ENCODE measurements at regions of chr17 and their contacts with region 1.

Region 1: GRCh38 chr17:73231841-73232586 is 29.7 kb downstream of the CPSF4L start:
- DNase-seq: peak; percentile 94 to 95
- ATAC-seq: peak; percentile 84 to 95
- H3K4me3 ChIP-seq: peak overlapping the region; percentile 88
- H3K27ac ChIP-seq: peak overlapping the region; percentile 89 to 95
- H3K4me1 ChIP-seq: peaks cover 44% of the 10 kb centered on the region
- CTCF ChIP-seq: no peak
- EP300 ChIP-seq: no peak
- POLR2A ChIP-seq: peak; percentile 88
- RAD21 ChIP-seq: peak in 1 of 2 experiments; percentile 1; a peak in 1 of 5 replicates

Region 2: DNA sequence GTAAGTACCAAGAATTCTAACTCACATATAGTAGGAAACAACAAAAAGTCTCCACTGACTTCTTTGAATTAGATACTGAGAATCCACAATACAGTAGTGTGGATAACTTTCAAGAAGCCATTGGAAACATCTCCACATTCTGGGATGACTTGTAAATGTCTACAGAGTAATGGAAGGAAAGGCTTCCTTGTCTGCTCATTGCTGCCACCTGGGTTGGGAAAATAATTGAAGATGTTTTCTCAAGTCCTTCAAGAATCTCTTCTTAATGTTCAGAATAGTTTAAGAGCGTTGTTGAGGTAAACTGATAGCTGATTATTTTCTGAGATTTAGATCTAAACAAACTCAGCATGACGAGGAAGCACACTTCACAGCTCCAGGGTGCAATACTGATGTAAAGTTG is 15.7 kb after region 1 on chr17:
- CTCF ChIA-PET with region 1: interaction called, 12 read pairs
- POLR2A ChIA-PET with region 1: interaction called, 4 read pairs
- DNase-seq: peak in 1 of 2 experiments; percentile 32
- ATAC-seq: peak in 1 of 2 experiments; percentile 41; a peak in 1 of 6 replicates
- H3K4me3 ChIP-seq: no peak overlapping the region
- H3K27ac ChIP-seq: no peak overlapping the region
- H3K4me1 ChIP-seq: no peaks in the 10 kb centered on the region
- CTCF ChIP-seq: peak; percentile 47
- EP300 ChIP-seq: no peak
- POLR2A ChIP-seq: no peak
- RAD21 ChIP-seq: peak; percentile 38; a peak in 3 of 5 replicates

Region 3: DNA sequence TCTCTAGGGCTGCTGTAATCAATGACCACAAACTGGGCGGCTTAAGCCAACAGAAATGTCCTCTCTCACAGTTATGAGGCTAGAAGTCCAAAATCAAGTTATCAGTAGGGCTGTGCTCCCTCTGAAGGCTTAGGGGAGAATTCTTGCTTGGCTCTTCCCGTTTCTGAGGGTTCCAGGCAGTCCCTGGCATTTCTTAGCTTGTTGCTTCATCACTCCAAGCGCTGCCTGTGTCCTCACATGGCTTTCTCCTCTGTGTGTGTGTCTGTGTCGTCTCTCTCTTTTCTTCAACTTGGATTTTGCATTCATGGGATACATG is 93.5 kb after region 1 on chr17:
- CTCF ChIA-PET with region 1: no interaction called
- POLR2A ChIA-PET with region 1: no interaction called
- DNase-seq: no peak
- ATAC-seq: peak; percentile 45 to 74; a peak in 4 of 6 replicates
- H3K4me3 ChIP-seq: no peak overlapping the region
- H3K27ac ChIP-seq: no peak overlapping the region
- H3K4me1 ChIP-seq: no peaks in the 10 kb centered on the region
- CTCF ChIP-seq: no peak
- EP300 ChIP-seq: no peak
- POLR2A ChIP-seq: no peak
- RAD21 ChIP-seq: no peak

Region 4: DNA sequence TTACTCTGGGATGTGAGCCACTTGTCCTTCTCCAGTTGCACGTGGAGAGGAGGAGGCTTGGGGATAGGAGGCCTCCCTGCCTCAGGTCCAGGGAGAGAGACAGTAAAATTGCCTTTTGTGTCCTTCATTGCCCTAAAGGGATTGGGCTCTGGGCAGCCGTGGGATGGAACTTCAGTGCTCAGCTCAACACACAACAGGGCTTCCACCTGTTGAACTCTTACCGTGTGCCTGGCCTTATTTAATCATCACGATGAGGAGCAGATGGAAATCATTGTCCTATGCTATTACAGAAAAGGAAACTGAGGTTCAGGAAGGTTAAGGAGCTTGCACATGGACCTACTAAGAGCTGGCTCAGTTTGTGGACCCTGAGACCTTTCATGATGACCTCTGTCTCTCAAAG is 172.2 kb after region 1 on chr17:
- CTCF ChIA-PET with region 1: no interaction called
- POLR2A ChIA-PET with region 1: no interaction called
- DNase-seq: no peak
- ATAC-seq: no peak
- H3K4me3 ChIP-seq: no peak overlapping the region
- H3K27ac ChIP-seq: no peak overlapping the region
- H3K4me1 ChIP-seq: no peaks in the 10 kb centered on the region
- CTCF ChIP-seq: no peak
- EP300 ChIP-seq: no peak
- POLR2A ChIP-seq: no peak
- RAD21 ChIP-seq: no peak

Measured in A549 (cell line).